ENCODE measurements at regions of chr15 and their contacts with region 1.

Region 1: GRCh38 chr15:92808978-92809879 is 90.9 kb upstream of the CHD2 start:
- DNase-seq: peak; percentile 100
- H3K4me3 Mint-ChIP-seq: peak overlapping the region; percentile 89
- H3K27ac Mint-ChIP-seq: peak overlapping the region; percentile 96
- H3K4me1 Mint-ChIP-seq: peaks cover 46% of the 10 kb centered on the region
- H3K27me3 Mint-ChIP-seq: no peaks in the 10 kb centered on the region

Region 2: DNA sequence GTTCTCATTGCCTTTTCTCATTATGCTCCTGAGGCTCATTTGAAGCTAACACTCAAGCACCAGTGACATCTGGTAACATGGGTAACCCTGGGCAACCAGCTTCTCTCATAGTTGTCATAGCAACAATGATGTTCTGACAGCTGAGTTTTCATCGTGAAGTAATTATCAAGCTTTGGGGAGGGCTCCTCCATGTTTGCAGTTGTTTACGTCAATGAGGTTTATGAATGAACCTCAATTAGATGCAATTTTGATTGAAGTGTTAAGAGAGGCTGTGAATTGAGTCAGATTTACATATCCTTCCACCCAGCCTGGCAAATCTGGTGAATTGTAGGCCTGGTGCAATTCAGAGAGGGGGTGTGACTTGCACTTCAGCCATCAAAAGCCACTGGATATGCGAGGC is 28.4 kb before region 1 on chr15:
- intact Hi-C with region 1: no loop called
- DNase-seq: no peak
- H3K4me3 Mint-ChIP-seq: no peak overlapping the region
- H3K27ac Mint-ChIP-seq: no peak overlapping the region
- H3K4me1 Mint-ChIP-seq: no peaks in the 10 kb centered on the region
- H3K27me3 Mint-ChIP-seq: peaks cover 3% of the 10 kb centered on the region

Region 3: GRCh38 chr15:92820236-92821021 is 11.2 kb after region 1 on chr15:
- intact Hi-C with region 1: loop called (anchors 1 kb)
- DNase-seq: peak; percentile 83
- H3K4me3 Mint-ChIP-seq: peak overlapping the region; percentile 82
- H3K27ac Mint-ChIP-seq: peak overlapping the region; percentile 94
- H3K4me1 Mint-ChIP-seq: peaks cover 47% of the 10 kb centered on the region
- H3K27me3 Mint-ChIP-seq: no peaks in the 10 kb centered on the region

Region 4: DNA sequence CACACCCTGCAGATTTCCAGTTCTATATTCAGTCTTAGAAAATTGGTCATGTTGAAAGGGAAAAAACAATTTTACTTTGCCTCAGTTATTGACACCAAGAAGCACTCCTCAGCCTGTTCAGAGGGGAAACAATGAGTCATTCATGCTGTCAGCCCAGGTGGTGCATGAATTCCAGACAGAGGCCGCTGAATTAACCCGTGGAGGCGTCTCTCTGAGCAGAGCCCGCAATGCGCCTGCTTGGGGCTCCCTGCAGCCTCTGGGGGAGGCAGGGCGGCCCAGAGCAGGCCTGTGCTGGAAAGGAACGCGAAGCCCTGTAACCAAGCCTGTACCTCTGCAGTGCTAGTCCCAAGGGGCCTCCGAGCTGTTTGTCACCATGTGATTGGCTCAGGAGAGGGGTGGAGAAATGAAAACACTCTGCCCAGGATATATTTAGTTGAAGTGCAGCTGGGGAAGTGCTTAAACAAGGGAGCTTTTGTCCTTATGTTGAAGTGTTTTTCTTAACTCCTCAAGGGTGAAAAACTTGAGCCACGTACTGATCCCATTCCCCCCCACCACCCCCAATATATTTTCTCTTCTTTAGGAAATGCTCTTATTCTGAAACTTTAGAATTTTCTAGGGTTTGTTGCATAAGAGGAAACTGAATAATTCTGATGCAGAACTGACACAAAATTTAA is 22.6 kb after region 1 on chr15:
- intact Hi-C with region 1: loop called (anchors 1 kb)
- DNase-seq: peak; percentile 89
- H3K4me3 Mint-ChIP-seq: peak overlapping the region; percentile 61
- H3K27ac Mint-ChIP-seq: peak overlapping the region; percentile 95
- H3K4me1 Mint-ChIP-seq: peaks cover 40% of the 10 kb centered on the region
- H3K27me3 Mint-ChIP-seq: no peaks in the 10 kb centered on the region

Region 5: GRCh38 chr15:92845126-92845508 is 35.9 kb after region 1 on chr15:
- intact Hi-C with region 1: loop called (anchors 5 kb)
- DNase-seq: no peak
- H3K4me3 Mint-ChIP-seq: peak overlapping the region; percentile 61
- H3K27ac Mint-ChIP-seq: peak overlapping the region; percentile 94
- H3K4me1 Mint-ChIP-seq: peaks cover 44% of the 10 kb centered on the region
- H3K27me3 Mint-ChIP-seq: no peaks in the 10 kb centered on the region

Region 6: DNA sequence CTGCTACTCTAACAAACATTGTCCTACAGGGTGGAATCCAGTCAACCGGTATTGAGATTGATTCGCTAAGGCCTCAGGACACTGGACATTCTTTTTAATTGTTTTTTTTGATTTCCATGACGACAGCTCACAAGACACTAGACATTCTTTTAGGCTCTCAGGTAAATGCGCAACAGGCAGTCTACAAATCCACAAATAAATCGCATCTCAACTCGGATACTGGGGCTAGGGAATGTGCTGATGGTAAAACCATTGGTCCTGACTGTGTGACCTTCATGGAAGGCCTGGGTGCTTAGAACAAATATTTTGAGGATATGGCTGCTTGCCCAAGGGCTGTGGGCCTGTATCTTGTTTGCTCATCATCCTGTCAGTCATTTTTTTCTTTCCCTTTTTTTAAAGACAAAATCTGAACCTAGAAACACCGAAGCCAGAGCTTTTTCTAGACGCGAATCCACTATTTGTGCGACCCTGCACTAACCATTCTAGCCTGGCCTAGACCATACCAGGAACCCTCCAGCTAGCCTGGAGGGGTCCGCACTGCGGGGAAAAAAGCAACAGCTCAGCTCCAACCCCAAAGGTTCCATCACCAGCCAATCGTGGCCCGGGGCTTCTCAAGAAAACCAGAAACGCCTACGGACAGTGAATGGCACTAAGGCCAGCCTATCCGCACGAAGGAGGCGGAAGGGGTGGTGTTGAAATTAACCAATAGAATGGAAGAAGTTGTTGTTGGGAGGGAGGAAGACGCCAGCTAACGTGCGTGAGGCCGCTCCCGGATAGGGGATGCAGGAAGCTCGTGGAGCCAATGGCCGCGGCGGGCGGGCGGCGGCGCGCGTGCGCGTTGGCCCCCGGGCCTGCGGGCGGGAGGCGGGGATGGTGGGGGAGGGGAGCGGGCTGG is 72.8 kb after region 1 on chr15:
- intact Hi-C with region 1: loop called (anchors 1 kb)
- DNase-seq: peak; percentile 98
- H3K4me3 Mint-ChIP-seq: peak overlapping the region; percentile 87
- H3K27ac Mint-ChIP-seq: peak overlapping the region; percentile 97
- H3K4me1 Mint-ChIP-seq: peaks cover 57% of the 10 kb centered on the region
- H3K27me3 Mint-ChIP-seq: no peaks in the 10 kb centered on the region

Region 7: GRCh38 chr15:92903941-92904831 is 95.0 kb after region 1 on chr15:
- intact Hi-C with region 1: loop called (anchors 1 kb)
- DNase-seq: peak; percentile 99
- H3K4me3 Mint-ChIP-seq: peak overlapping the region; percentile 94
- H3K27ac Mint-ChIP-seq: peak overlapping the region; percentile 100
- H3K4me1 Mint-ChIP-seq: peaks cover 57% of the 10 kb centered on the region
- H3K27me3 Mint-ChIP-seq: no peaks in the 10 kb centered on the region

Region 8: DNA sequence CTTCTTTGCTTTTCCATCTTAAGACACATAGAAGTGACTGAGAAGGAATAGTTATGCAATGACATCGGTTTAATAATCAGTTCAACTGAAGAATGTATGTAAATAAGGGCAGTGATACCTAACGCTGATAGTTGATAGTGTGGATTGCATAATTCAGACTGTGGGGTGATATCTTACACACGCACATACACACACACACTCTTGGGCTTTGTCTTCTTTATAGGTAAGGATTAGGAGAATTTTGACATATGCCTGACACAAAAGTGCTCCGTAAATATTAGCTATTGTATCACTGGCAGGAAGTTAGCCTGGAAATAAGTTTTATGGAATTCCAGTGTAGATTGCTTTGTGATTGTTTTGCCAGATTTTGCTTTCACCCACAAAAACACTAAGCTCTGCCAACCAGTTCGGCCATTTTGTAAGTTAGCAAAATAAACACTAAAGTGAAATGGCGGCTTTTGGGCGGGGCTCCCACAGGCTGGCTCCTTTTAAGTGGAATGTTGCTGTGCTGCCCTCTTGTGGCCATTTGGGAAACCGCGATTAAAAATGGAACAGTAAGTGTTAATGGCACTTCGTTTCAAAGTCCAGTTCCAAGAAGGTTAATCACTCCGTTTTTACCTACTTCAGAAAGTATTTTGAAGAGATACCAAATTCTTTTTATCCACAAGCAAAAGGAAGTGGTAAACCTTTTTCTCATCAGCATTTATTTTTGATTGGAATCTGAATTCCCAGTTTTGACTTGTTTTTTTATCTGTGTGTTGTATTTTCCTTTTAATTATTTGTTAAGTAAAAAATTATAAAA is 108.6 kb after region 1 on chr15:
- intact Hi-C with region 1: loop called (anchors 1 kb)
- DNase-seq: peak; percentile 87
- H3K4me3 Mint-ChIP-seq: peak overlapping the region; percentile 33
- H3K27ac Mint-ChIP-seq: peak overlapping the region; percentile 82
- H3K4me1 Mint-ChIP-seq: peaks cover 77% of the 10 kb centered on the region
- H3K27me3 Mint-ChIP-seq: no peaks in the 10 kb centered on the region